Activated T-helper 2 cell treated with anti-CD3 and anti-CD28 coated beads, Interferon-gamma antibody, Interleukin-2, Interleukin-4, amounts not matched to agents 10 μg/mL and 5 μg/mL and 100 μg/mL, durations not matched to agents 14 hours and 24 hours and 36 hours (primary cell): ENCODE measurements at regions of chr2 and their contacts with region 1.

Region 1: DNA sequence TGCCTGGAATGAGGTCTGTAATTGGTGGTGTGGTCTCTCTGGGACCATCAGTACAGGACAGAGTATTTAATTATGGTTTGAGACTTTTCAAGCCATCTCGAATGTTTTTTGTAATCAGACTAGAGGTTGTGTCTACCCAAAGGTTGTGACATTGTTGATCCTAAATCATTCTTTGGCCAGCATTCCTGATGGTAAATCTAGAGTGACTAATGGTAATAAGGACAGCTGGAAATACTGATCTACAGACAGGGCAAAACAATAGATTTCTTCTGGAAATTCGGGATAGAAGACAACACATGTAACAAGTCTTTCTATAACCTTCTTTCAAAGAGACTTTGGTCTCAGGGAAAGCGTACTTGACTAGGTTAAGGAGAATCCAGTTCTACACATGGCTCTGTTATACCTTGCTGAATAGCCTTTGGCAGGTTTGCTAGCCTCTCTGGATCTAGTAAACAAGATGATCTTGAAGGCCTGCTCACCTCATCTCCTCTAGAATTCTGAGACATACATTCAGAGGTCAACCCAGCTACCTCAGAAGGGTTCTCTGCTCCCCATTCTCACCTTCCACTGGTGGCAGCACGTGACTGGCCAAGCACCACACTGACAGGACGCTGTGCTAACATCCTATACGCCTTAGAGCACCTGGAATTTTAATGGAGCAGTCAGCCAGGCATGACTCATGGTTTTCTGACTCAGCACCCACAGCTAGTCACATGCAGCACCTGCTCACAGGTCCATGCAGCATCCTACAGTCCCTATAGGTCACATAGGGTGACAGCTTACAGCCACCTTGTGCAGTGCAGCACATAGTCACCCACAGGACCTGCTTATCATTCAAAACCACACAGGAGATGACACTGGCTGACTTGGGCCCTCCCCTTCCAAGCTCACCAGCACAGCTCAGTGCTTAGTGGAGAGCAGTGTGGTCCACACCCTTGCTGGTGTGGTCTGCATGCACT is 12.2 kb downstream of the PLB1 start:
- DNase-seq: peak; percentile 33
- H3K4me3 Mint-ChIP-seq: no peak overlapping the region
- H3K27ac Mint-ChIP-seq: peak overlapping the region; percentile 24
- H3K4me1 Mint-ChIP-seq: peaks cover 39% of the 10 kb centered on the region
- H3K27me3 Mint-ChIP-seq: peaks cover 13% of the 10 kb centered on the region

Region 2: DNA sequence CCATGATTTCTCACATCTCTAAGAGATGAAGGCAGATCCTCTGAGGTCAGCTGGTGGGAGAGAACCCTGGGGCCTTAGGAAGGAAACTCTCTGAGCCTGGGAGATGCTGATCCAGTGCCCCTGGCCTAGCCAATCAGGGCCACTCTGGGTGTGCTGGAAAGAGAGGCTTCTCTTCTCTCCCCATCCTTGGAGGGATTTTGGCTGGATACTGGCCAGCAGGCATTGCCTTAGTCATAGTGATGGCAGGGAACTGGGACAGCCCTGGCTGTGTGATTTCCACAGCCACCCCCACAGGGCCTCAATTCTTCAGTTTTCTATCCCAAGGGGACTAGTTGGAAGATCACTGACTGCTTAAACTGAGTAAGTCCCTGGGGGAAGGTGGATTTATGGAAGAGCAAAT is 38.8 kb before region 1 on chr2:
- intact Hi-C with region 1: loop called (anchors 5 kb)
- DNase-seq: no peak
- H3K4me3 Mint-ChIP-seq: no peak overlapping the region
- H3K27ac Mint-ChIP-seq: no peak overlapping the region
- H3K4me1 Mint-ChIP-seq: peaks cover 52% of the 10 kb centered on the region
- H3K27me3 Mint-ChIP-seq: no peaks in the 10 kb centered on the region

Region 3: GRCh38 chr2:28544919-28545589 is 37.0 kb after region 1 on chr2:
- intact Hi-C with region 1: loop called (anchors 2 kb)
- DNase-seq: peak; percentile 27
- H3K4me3 Mint-ChIP-seq: peak overlapping the region; percentile 44
- H3K27ac Mint-ChIP-seq: peak overlapping the region; percentile 86
- H3K4me1 Mint-ChIP-seq: peaks cover 34% of the 10 kb centered on the region
- H3K27me3 Mint-ChIP-seq: no peaks in the 10 kb centered on the region

Region 4: GRCh38 chr2:28558158-28558820 is 50.2 kb after region 1 on chr2:
- intact Hi-C with region 1: no loop called
- DNase-seq: no peak
- H3K4me3 Mint-ChIP-seq: no peak overlapping the region
- H3K27ac Mint-ChIP-seq: no peak overlapping the region
- H3K4me1 Mint-ChIP-seq: peaks cover 10% of the 10 kb centered on the region
- H3K27me3 Mint-ChIP-seq: no peaks in the 10 kb centered on the region